H1 (cell line): ENCODE measurements at regions of chr15 and their contacts with region 1.

Region 1: DNA sequence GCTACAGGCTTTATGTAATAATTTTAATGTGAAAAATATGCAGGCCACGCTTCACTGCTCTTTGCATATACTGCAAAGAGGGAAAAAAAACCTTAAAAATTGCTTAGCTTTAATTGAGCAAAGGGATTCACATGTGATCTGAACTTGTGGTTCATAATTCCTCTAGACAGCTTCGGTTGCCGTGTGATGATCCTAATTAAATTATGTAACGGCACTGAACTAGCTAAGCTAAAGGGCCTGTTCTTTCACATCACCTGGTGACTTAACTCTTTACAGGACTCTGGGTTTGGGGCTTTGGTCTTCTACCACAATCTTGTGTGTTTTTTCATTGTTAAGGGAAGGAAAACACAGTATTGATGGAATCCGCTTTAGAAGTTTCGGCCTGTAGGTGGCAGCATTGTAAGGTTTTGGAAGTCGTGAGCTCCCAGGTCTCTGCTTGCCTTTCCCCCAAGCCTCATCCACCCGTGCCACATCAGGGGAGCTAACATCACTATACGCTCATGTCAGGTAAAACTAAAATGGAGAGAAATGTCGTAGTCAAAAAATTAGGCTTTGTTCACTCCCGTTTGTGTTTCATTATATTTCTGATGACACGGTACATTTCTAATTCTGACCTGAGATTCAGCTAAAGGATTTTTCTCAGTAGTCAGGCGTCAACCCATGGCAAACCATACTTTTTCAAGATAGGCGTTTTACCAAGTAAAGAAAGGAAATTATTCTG is 205.6 kb upstream of the DPH6 start:
- DNase-seq: peak; percentile 33 to 87
- H3K4me3 ChIP-seq: no peak overlapping the region; a peak in 1 of 8 replicates
- H3K27ac ChIP-seq: no peak overlapping the region
- H3K4me1 ChIP-seq: peaks cover 0 to 4% (median 0%) of the 10 kb centered on the region in 4 experiments; a peak in 1 of 7 replicates
- H3K27me3 ChIP-seq: no peaks in the 10 kb centered on the region; a peak in 1 of 7 replicates
- CTCF ChIP-seq: peak; percentile 30 to 76 (median 60)
- EP300 ChIP-seq: no peak
- POLR2A ChIP-seq: no peak
- RAD21 ChIP-seq: peak; percentile 84 to 87

Region 2: DNA sequence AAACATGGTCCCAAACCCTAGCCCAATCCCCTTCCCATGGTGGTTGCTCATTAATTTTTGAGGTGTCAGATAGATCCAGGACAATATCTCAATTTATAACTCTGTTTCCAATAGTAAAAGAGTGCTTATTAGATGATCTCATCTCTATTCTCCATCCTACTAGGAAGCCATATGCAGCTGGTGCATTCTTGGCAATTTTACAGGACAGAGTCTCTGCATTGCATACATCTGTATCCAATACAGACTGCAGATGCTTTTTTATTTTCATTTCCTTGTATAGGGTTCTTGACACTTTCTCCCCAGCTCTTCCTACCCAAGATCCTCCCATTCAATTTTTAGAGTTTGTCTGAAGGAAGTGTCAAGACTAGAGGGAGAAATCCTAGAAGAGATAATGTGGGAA is 10.8 kb before region 1 on chr15:
- CTCF ChIA-PET with region 1: interaction called, 15 read pairs
- POLR2A ChIA-PET with region 1: no interaction called
- DNase-seq: no peak
- H3K4me3 ChIP-seq: no peak overlapping the region
- H3K27ac ChIP-seq: no peak overlapping the region
- H3K4me1 ChIP-seq: no peaks in the 10 kb centered on the region
- H3K27me3 ChIP-seq: no peaks in the 10 kb centered on the region
- CTCF ChIP-seq: no peak
- EP300 ChIP-seq: no peak
- POLR2A ChIP-seq: no peak
- RAD21 ChIP-seq: no peak

Region 3: DNA sequence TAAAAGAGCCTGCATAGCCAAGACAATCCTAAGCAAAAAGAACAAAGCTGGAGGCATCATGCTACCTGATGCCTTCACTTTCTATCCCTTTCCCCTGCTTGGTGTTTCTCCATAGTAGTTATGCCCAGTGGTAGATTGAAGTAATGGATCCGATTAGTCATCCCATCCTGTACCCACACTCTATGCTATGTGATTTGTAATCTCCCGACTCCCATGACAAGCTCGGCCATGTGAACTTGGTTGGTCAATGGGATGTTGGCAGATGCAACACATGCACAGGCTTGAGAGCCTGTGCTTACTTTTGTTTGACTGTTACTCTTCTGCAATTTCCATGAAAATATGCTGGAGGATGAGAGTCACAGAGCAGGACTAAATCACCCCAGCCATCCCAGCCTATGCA is 129.3 kb after region 1 on chr15:
- CTCF ChIA-PET with region 1: no interaction called
- POLR2A ChIA-PET with region 1: no interaction called
- DNase-seq: no peak
- H3K4me3 ChIP-seq: no peak overlapping the region
- H3K27ac ChIP-seq: no peak overlapping the region
- H3K4me1 ChIP-seq: no peaks in the 10 kb centered on the region
- H3K27me3 ChIP-seq: no peaks in the 10 kb centered on the region
- CTCF ChIP-seq: no peak
- EP300 ChIP-seq: no peak
- POLR2A ChIP-seq: no peak
- RAD21 ChIP-seq: no peak

Region 4: DNA sequence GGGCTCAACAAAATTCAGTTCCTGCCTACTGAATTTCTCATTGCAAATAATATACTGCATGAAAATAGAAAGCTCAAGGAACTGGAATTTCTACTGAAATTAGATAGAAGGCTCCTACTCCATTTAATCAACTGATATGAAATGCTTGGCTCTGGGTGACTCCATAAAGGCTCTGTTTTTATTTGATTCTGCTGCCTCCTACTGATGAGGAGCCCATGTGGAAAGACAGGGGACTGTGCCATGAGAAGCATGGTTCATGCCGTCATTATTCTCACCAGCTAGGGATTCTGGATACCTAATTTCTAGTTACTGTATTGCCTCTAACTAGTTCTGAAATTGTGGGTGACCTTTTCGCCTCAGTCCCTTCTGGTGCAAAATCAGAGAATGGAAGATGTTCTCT is 160.6 kb after region 1 on chr15:
- CTCF ChIA-PET with region 1: interaction called, 13 read pairs
- POLR2A ChIA-PET with region 1: no interaction called
- DNase-seq: no peak
- H3K4me3 ChIP-seq: no peak overlapping the region
- H3K27ac ChIP-seq: no peak overlapping the region
- H3K4me1 ChIP-seq: no peaks in the 10 kb centered on the region
- H3K27me3 ChIP-seq: no peaks in the 10 kb centered on the region
- CTCF ChIP-seq: peak in 2 of 3 experiments; percentile 19 to 34; a peak in 2 of 4 replicates
- EP300 ChIP-seq: no peak
- POLR2A ChIP-seq: no peak
- RAD21 ChIP-seq: peak; percentile 48 to 66